CD4-positive, alpha-beta T cell (primary cell): ENCODE measurements at regions of chr13 and their contacts with region 1.

Region 1: DNA sequence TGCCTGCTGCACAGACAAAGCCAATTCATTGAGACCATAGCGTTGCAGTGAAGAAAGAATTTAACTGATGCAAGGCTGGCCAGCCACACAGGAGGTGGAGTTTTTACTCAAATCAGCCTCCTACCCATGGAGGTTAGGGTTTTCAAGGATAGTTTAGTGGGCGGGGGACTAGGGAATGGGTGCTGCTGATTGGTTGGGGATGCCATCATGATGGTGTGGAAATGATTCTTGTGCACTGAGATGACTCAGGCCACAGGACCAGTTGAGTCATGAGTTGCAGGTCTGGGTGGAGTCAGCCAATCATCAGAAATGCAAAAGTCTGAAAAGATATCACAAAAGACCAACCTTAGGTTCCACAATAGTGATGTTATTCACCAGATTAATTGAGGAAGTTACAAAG is 359.6 kb downstream of the FOXO1 start:
- DNase-seq: no peak
- ATAC-seq: no peak
- H3K4me3 ChIP-seq: no peak overlapping the region
- H3K4me3 Mint-ChIP-seq: no peak overlapping the region
- H3K27ac ChIP-seq: no peak overlapping the region
- H3K27ac Mint-ChIP-seq: no peak overlapping the region
- H3K4me1 ChIP-seq: no peaks in the 10 kb centered on the region
- H3K4me1 Mint-ChIP-seq: peaks cover 18% of the 10 kb centered on the region
- H3K27me3 ChIP-seq: no peaks in the 10 kb centered on the region
- H3K27me3 Mint-ChIP-seq: no peaks in the 10 kb centered on the region
- CTCF ChIP-seq: no peak

Region 2: DNA sequence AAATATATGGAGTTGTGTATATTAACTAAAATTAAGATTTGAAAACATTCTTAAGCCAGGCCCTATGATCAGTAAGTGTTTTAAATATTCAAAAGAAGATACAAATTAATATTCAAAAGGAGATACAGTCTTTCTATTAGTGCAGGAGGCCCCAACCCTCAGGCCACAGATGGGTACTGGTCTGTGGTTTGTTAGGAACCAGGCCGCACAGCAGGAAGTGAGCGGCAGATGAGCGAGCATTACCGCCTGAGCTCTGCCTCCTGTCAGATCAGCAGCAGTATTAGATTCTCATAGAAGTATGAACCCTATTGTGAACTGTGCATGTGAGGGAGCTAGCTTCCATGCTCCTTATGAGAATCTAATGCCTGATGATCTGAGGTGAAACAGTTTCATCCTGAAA is 126.8 kb after region 1 on chr13:
- CTCF ChIA-PET with region 1: no interaction called
- POLR2A ChIA-PET with region 1: no interaction called
- intact Hi-C with region 1: loop called in 1 of 2 experiments (anchors 5 kb)
- DNase-seq: peak in 12 of 14 experiments; percentile 19 to 76 (median 39)
- ATAC-seq: peak; percentile 55
- H3K4me3 ChIP-seq: no peak overlapping the region
- H3K4me3 Mint-ChIP-seq: peak overlapping the region; percentile 62
- H3K27ac ChIP-seq: no peak overlapping the region
- H3K27ac Mint-ChIP-seq: peak overlapping the region; percentile 73
- H3K4me1 ChIP-seq: peaks cover 39% of the 10 kb centered on the region
- H3K4me1 Mint-ChIP-seq: peaks cover 72% of the 10 kb centered on the region
- H3K27me3 ChIP-seq: no peaks in the 10 kb centered on the region
- H3K27me3 Mint-ChIP-seq: no peaks in the 10 kb centered on the region
- CTCF ChIP-seq: no peak